ENCODE measurements at regions of chr9 and their contacts with region 1.

Region 1: DNA sequence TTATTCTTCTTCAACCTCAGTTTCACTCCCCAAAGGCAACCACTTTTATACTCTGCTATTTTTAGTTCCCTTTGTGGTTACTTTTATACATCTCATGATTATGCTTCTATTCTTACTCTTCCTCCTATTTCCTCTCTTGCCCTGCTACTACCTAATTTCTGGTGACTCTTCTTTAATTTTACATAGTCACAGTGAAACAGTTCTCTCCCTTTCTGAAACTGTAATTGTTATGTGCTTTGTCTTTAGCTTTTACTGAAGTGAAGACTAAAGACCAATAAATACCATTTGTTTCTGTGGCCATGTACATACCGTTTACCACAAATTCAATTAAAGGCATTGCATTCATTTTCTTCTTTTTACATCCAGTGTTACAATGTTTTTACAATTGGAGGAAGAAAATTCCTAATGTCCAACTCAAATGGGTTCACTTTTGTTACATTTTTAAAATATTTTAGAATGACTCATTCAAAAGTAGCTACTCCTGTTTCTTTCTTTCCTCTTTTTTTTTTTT is 410.6 kb downstream of the PSAT1 start:
- DNase-seq: peak; percentile 74
- ATAC-seq: peak; percentile 86
- H3K4me3 ChIP-seq: peak overlapping the region; percentile 16; the same call in 1 of the 2 replicates
- H3K27ac ChIP-seq: peak overlapping the region; percentile 81
- H3K4me1 ChIP-seq: peaks cover 5% of the 10 kb centered on the region; the same call in 1 of the 2 replicates
- H3K27me3 ChIP-seq: no peaks in the 10 kb centered on the region
- CTCF ChIP-seq: no peak
- POLR2A ChIP-seq: no peak
- RAD21 ChIP-seq: no peak; the same call in 1 of the 2 replicates

Region 2: DNA sequence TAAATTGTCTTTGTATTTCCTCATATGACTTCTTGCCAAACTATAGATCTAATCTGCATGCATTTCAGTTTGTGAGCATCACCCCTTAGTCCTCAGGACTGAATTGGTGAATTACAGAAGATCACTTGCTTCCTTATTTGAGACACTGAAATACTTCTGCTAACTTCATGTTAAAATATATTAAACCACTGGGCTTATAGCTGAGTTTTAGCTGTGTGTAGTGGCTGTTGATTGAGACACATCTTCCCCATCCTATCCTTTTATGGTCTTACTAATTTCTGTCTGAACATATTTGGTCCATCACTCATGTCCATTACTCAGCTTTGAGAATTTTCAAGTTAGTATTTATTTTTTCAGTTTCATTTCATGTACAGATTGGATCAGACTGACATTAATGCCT is 114.7 kb before region 1 on chr9:
- CTCF ChIA-PET with region 1: no interaction called
- POLR2A ChIA-PET with region 1: interaction called, 12 read pairs
- dilution Hi-C with region 1: no loop called
- in situ Hi-C with region 1: no loop called
- intact Hi-C with region 1: no loop called
- DNase-seq: peak; percentile 78
- ATAC-seq: peak; percentile 37; the same call in 1 of the 2 replicates
- H3K4me3 ChIP-seq: no peak overlapping the region
- H3K27ac ChIP-seq: 0 out of 2 replicates have a peak overlapping the region, but pooled peaks have one; percentile 27
- H3K4me1 ChIP-seq: peaks cover 11% of the 10 kb centered on the region
- H3K27me3 ChIP-seq: no peaks in the 10 kb centered on the region
- CTCF ChIP-seq: no peak
- POLR2A ChIP-seq: no peak
- RAD21 ChIP-seq: no peak

Region 3: DNA sequence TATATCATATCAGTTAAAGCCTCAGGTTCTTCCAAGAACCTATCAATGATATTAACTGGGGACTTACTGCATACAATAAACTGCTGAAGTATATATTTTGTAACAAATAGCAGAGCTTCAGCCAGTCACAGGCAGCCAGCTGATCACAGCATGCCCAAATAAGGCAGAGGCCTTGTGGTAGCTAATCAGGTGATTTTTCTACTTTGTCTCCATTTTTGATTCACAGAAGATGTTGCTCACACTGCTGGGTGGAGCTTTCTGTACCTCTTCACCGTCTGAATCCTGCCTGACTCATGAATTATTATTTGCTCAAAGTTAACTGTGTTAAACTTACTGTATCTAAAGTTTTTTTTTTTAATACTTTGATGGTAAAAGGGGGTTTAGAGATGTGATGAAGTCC is 53.2 kb before region 1 on chr9:
- CTCF ChIA-PET with region 1: no interaction called
- POLR2A ChIA-PET with region 1: no interaction called
- dilution Hi-C with region 1: no loop called
- in situ Hi-C with region 1: no loop called
- intact Hi-C with region 1: no loop called
- DNase-seq: no peak
- ATAC-seq: no peak
- H3K4me3 ChIP-seq: no peak overlapping the region
- H3K27ac ChIP-seq: no peak overlapping the region
- H3K4me1 ChIP-seq: no peaks in the 10 kb centered on the region
- H3K27me3 ChIP-seq: no peaks in the 10 kb centered on the region
- CTCF ChIP-seq: no peak
- POLR2A ChIP-seq: no peak
- RAD21 ChIP-seq: no peak

Region 4: DNA sequence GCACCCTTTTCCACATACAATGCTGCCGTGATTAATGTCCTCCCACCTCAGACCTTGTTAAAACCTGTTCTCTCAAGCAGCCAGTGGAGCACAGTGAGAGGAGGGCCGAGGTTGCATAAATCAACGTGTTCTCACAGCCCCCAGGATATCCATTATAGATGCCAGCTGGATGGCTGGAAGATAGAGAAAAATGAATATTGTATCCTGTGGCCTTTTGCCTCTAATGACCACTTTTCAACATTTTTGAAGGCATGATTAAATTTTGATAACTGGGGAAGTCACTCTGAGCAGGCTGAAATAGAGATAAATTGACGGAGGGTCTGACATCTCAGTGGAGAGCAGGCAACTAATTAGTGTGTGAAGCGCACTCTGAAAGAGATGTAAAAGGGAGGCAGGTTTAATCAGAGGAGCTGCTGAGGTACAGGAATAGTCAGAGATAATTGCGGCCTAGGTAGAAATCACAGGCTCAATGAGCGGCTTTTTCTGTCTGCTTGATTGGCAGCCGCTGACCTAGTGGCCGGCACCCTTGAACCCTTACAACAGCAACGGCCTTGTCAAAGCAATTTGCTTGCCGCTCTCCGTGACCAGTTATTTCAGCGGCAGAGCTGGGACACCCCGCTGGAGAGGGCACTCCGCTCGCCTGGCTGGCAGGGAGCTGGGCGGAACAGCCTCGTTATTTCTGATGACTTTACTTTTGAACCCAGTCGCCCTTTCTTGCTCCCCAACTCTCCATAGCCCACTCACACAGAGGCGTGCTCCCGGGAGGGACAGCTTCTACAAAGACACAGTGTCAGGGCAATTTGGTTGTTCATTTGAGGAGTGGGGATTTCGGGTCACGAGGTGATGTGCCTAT is 150.1 kb after region 1 on chr9:
- CTCF ChIA-PET with region 1: no interaction called
- POLR2A ChIA-PET with region 1: interaction called, 12 read pairs
- dilution Hi-C with region 1: no loop called
- in situ Hi-C with region 1: no loop called
- intact Hi-C with region 1: no loop called
- DNase-seq: no peak
- ATAC-seq: no peak
- H3K4me3 ChIP-seq: no peak overlapping the region
- H3K27ac ChIP-seq: no peak overlapping the region
- H3K4me1 ChIP-seq: peaks cover 5% of the 10 kb centered on the region; the same call in 1 of the 2 replicates
- H3K27me3 ChIP-seq: no peaks in the 10 kb centered on the region
- CTCF ChIP-seq: no peak
- POLR2A ChIP-seq: no peak
- RAD21 ChIP-seq: no peak

Region 5: GRCh38 chr9:79013715-79014610 is 306.4 kb after region 1 on chr9:
- CTCF ChIA-PET with region 1: no interaction called
- POLR2A ChIA-PET with region 1: no interaction called
- dilution Hi-C with region 1: no loop called
- in situ Hi-C with region 1: no loop called
- intact Hi-C with region 1: no loop called
- DNase-seq: peak; percentile 38
- ATAC-seq: peak; percentile 28
- H3K4me3 ChIP-seq: no peak overlapping the region
- H3K27ac ChIP-seq: no peak overlapping the region
- H3K4me1 ChIP-seq: peaks cover 13% of the 10 kb centered on the region
- H3K27me3 ChIP-seq: no peaks in the 10 kb centered on the region
- CTCF ChIP-seq: no peak
- POLR2A ChIP-seq: no peak
- RAD21 ChIP-seq: no peak

Measured in IMR-90 (cell line).